Testis (tissue), 5 donors: ENCODE measurements at regions of chr12 and their contacts with region 1.

Region 1: GRCh38 chr12:54279866-54280467 is at the start of gene CBX5:
- DNase-seq: peak; percentile 98
- H3K4me3 ChIP-seq: peak within 1 kb of the TSS; percentile 78 to 88
- H3K27ac ChIP-seq: peak within 1 kb of the TSS; percentile 90 to 95
- H3K4me1 ChIP-seq: peaks cover 38% of the 10 kb centered on the region
- H3K27me3 ChIP-seq: no peaks in the 10 kb centered on the region
- CTCF ChIP-seq: peak in 1 of 3 experiments; percentile 16
- POLR2A ChIP-seq: peak; percentile 71
- total RNA-seq, gene CBX5: 52.7 to 63.9 TPM

Region 2: DNA sequence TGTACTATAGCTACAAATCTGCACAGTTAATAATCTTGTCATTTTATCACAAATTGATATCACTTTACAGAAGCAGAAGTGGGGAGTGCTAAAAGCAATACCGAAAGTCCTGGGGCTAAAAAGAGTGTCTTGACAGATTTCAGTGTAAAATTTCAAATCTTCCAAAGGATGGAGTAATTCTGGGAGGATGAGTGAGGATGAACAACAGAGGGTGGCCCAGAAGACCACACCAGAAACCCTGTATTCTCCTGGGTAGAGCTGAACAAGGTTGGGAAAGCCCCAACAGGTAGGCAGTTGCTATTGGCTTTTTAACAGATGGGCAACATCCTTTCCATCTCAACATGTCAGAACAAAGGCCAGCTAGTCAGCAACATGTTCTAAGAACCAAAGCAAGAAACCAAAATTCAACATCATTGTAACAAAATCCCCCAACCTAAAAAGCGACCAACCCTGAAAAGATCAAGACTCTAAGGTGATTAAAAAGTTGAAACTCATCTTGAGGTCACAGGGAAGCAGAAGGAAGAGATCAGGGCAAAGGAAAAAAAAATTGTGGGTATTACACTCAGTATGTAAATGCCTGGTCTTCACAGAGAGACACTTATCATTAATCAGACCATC is 38.9 kb before region 1 on chr12:
- intact Hi-C with region 1: no loop called
- DNase-seq: no peak
- H3K4me3 ChIP-seq: no peak overlapping the region
- H3K27ac ChIP-seq: no peak overlapping the region
- H3K4me1 ChIP-seq: no peaks in the 10 kb centered on the region
- H3K27me3 ChIP-seq: no peaks in the 10 kb centered on the region
- CTCF ChIP-seq: no peak
- POLR2A ChIP-seq: no peak

Region 3: GRCh38 chr12:54368709-54369583 is 89.0 kb after region 1 on chr12:
- intact Hi-C with region 1: loop called (anchors 10 kb)
- DNase-seq: peak; percentile 93
- H3K4me3 ChIP-seq: peak overlapping the region; percentile 37 to 58
- H3K27ac ChIP-seq: peak overlapping the region; percentile 40 to 82
- H3K4me1 ChIP-seq: peaks cover 34% of the 10 kb centered on the region
- H3K27me3 ChIP-seq: no peaks in the 10 kb centered on the region
- CTCF ChIP-seq: peak; percentile 70 to 85 (median 71)
- POLR2A ChIP-seq: no peak